IMR-90 (cell line): ENCODE measurements at regions of chr12 and their contacts with region 1.

Region 1: DNA sequence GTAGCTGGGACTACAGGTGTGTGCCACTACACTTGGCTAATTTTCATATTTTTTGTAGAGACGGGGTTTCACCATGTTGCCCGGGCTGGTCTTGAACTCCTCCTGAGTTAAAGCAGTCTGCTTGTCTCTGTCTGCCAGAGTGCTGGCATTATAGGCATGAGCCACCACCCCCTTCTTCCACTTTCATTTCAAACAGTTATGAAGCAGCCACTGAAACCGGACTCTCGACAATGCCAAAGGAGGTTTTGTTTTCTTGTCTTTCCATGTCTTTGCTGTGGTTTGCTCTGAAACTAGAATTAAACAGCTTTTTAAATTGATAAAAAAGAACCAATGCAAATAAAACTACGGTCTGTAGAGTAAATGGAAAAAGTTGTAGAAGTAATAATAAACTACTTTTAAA is 30.4 kb downstream of the RAP1B start:
- DNase-seq: no peak
- ATAC-seq: 0 out of 2 replicates have a peak, but pooled peaks have one; percentile 30
- H3K4me3 ChIP-seq: no peak overlapping the region
- H3K27ac ChIP-seq: no peak overlapping the region
- H3K4me1 ChIP-seq: peaks cover 11% of the 10 kb centered on the region
- H3K27me3 ChIP-seq: no peaks in the 10 kb centered on the region
- CTCF ChIP-seq: no peak
- POLR2A ChIP-seq: no peak
- RAD21 ChIP-seq: no peak

Region 2: GRCh38 chr12:67394550-67394949 is 1246.6 kb before region 1 on chr12:
- CTCF ChIA-PET with region 1: no interaction called
- POLR2A ChIA-PET with region 1: no interaction called
- dilution Hi-C with region 1: no loop called
- in situ Hi-C with region 1: no loop called
- intact Hi-C with region 1: no loop called
- DNase-seq: peak; percentile 57
- ATAC-seq: peak; percentile 88
- H3K4me3 ChIP-seq: no peak overlapping the region
- H3K27ac ChIP-seq: no peak overlapping the region
- H3K4me1 ChIP-seq: no peaks in the 10 kb centered on the region
- H3K27me3 ChIP-seq: 0 out of 2 replicates have a peak, but pooled peaks cover 1% of the 10 kb centered on the region
- CTCF ChIP-seq: 0 out of 2 replicates have a peak, but pooled peaks have one; percentile 20
- POLR2A ChIP-seq: no peak
- RAD21 ChIP-seq: no peak

Region 3: DNA sequence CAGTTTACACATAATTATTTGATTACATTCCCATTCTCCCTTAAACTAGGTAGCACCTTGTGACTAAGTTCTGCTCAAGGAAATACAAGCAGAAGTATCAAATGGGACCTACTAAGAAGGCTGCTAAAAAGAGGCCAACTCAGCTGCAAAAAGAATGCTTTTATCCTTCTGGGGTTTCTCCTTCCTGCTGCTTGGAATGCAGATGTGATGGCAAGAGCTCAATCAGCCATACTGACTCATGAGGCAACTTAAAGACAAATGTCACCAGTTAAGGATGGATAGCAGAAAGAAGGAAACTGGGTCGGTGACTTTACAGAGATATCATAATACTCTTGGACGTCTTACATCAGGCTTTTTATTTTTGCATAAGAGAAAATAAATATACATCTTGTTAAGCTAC is 68.5 kb before region 1 on chr12:
- CTCF ChIA-PET with region 1: no interaction called
- POLR2A ChIA-PET with region 1: no interaction called
- dilution Hi-C with region 1: no loop called
- in situ Hi-C with region 1: no loop called
- intact Hi-C with region 1: no loop called
- DNase-seq: peak; percentile 24
- ATAC-seq: no peak
- H3K4me3 ChIP-seq: no peak overlapping the region
- H3K27ac ChIP-seq: no peak overlapping the region
- H3K4me1 ChIP-seq: no peaks in the 10 kb centered on the region
- H3K27me3 ChIP-seq: no peaks in the 10 kb centered on the region
- CTCF ChIP-seq: no peak
- POLR2A ChIP-seq: no peak
- RAD21 ChIP-seq: no peak

Region 4: GRCh38 chr12:68595241-68595640 is 45.9 kb before region 1 on chr12:
- CTCF ChIA-PET with region 1: no interaction called
- POLR2A ChIA-PET with region 1: no interaction called
- dilution Hi-C with region 1: no loop called
- in situ Hi-C with region 1: no loop called
- intact Hi-C with region 1: no loop called
- DNase-seq: no peak
- ATAC-seq: no peak
- H3K4me3 ChIP-seq: no peak overlapping the region
- H3K27ac ChIP-seq: no peak overlapping the region
- H3K4me1 ChIP-seq: no peaks in the 10 kb centered on the region
- H3K27me3 ChIP-seq: no peaks in the 10 kb centered on the region
- CTCF ChIP-seq: no peak
- POLR2A ChIP-seq: no peak
- RAD21 ChIP-seq: no peak

Region 5: DNA sequence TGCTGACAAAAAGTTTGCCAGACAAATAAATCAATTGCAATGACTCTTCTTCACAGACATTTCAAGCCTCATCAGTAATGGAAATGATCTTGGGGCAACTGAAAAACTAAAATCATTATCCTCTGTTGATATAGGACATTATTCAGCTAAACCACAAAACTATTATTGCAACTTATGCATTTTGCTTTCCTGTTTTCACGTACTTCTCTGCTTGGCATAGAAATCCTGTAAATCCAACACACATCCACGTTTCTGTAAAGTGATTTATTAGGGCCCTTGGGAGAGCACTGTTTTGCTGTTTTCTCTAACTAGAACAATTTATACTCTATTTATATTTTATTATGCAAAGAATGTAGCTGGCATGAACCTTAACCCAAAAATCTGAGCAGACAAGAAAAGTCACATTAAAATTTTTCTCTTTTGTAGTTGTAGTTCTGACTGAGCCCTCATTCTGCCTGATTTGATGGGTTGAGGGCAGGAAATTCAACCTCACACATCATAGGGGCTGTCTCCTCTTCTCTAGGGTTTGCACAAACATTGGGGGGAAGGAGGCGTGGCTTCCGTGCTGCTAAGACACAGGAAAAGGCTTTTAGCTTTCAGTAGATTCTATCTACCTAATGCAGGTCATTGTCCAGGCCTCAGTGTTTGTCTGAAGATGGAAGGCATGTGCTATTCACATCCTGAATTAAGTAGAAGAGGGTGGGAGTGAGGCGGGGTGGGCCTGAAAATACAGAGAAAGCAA is 34.1 kb after region 1 on chr12:
- CTCF ChIA-PET with region 1: no interaction called
- POLR2A ChIA-PET with region 1: no interaction called
- dilution Hi-C with region 1: no loop called
- in situ Hi-C with region 1: no loop called
- intact Hi-C with region 1: loop called (anchors 5 kb)
- DNase-seq: no peak
- ATAC-seq: peak; percentile 11; the same call in 1 of the 2 replicates
- H3K4me3 ChIP-seq: no peak overlapping the region
- H3K27ac ChIP-seq: no peak overlapping the region
- H3K4me1 ChIP-seq: 0 out of 2 replicates have a peak, but pooled peaks cover 2% of the 10 kb centered on the region
- H3K27me3 ChIP-seq: no peaks in the 10 kb centered on the region
- CTCF ChIP-seq: no peak
- POLR2A ChIP-seq: no peak
- RAD21 ChIP-seq: no peak